HCT116 (cell line): ENCODE measurements at regions of chr18 and their contacts with region 1.

Region 1: DNA sequence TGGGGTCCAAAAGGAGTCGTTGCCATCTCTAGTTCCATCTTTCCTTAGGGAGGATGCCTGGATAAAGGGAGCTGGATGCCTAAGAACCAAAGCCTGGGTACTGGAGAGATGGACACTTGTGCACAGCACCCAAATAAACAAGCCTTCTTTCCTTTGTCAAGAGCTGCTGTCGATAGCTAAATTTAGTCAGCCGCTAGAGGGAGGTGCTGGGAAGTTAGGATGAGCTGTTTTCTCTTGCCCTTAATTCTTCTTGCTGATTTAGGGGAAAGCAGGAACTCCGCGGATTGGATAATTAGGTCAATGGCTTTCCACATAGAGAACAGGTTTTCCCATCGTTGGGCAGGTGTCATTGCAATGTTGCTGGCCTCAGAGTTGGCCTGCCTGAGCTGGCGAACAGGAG is 30.9 kb upstream of the SERPINB12 start:
- DNase-seq: peak; percentile 82
- ATAC-seq: peak; percentile 92
- H3K4me3 ChIP-seq: no peak overlapping the region
- H3K27ac ChIP-seq: no peak overlapping the region
- H3K4me1 ChIP-seq: no peaks in the 10 kb centered on the region
- H3K27me3 ChIP-seq: no peaks in the 10 kb centered on the region
- CTCF ChIP-seq: peak; percentile 55 to 85 (median 78); a peak in 5 of 6 replicates
- POLR2A ChIP-seq: no peak
- RAD21 ChIP-seq: peak; percentile 58

Region 2: GRCh38 chr18:63016270-63016669 is 495.0 kb before region 1 on chr18:
- CTCF ChIA-PET with region 1: interaction called, 12 read pairs
- POLR2A ChIA-PET with region 1: no interaction called
- RAD21 ChIA-PET with region 1: no interaction called
- intact Hi-C with region 1: loop called (anchors 5 kb)
- DNase-seq: peak; percentile 32
- ATAC-seq: peak; percentile 79
- H3K4me3 ChIP-seq: no peak overlapping the region
- H3K27ac ChIP-seq: no peak overlapping the region
- H3K4me1 ChIP-seq: no peaks in the 10 kb centered on the region
- H3K27me3 ChIP-seq: no peaks in the 10 kb centered on the region
- CTCF ChIP-seq: peak; percentile 73 to 87 (median 73)
- POLR2A ChIP-seq: no peak
- RAD21 ChIP-seq: peak; percentile 82

Region 3: DNA sequence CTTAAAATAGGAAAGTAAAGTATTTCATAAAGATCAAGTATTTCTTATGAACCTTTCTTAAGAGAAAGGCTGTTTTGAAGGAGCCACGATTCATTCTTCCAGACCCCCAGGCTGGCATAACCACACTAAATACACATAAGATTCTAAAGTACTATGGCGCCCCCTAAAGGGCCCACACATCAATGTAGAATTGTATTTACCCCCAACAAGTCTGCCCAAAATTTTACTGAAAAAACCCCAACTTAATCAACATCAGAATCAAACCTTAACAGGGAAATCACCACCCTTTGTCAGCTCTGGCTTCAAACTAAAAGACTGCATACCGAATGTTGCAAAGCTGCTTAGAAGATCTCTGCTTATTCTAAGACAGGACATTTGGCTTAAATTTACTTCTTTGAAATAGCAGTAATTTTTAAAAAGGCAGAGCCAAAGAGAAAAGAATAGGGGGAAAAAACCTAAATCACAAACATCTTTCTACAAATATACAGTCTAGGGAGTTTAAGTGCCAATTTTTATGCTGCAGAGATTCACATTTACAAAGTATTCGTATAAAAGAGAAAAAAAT is 171.3 kb before region 1 on chr18:
- CTCF ChIA-PET with region 1: no interaction called
- POLR2A ChIA-PET with region 1: no interaction called
- RAD21 ChIA-PET with region 1: no interaction called
- intact Hi-C with region 1: loop called (anchors 5 kb)
- DNase-seq: peak; percentile 10
- ATAC-seq: peak; percentile 57; the same call in 1 of the 2 replicates
- H3K4me3 ChIP-seq: no peak overlapping the region
- H3K27ac ChIP-seq: no peak overlapping the region
- H3K4me1 ChIP-seq: peaks cover 10 to 15% of the 10 kb centered on the region in 2 experiments
- H3K27me3 ChIP-seq: no peaks in the 10 kb centered on the region
- CTCF ChIP-seq: peak; percentile 29 to 78 (median 68); a peak in 5 of 6 replicates
- POLR2A ChIP-seq: no peak
- RAD21 ChIP-seq: peak; percentile 41; the same call in 1 of the 2 replicates

Region 4: GRCh38 chr18:63539904-63540510 is 28.7 kb after region 1 on chr18:
- CTCF ChIA-PET with region 1: no interaction called
- POLR2A ChIA-PET with region 1: no interaction called
- RAD21 ChIA-PET with region 1: no interaction called
- intact Hi-C with region 1: no loop called
- DNase-seq: no peak
- ATAC-seq: no peak
- H3K4me3 ChIP-seq: no peak overlapping the region
- H3K27ac ChIP-seq: no peak overlapping the region
- H3K4me1 ChIP-seq: no peaks in the 10 kb centered on the region
- H3K27me3 ChIP-seq: no peaks in the 10 kb centered on the region
- CTCF ChIP-seq: no peak
- POLR2A ChIP-seq: no peak
- RAD21 ChIP-seq: no peak

Region 5: GRCh38 chr18:63741769-63742168 is 230.5 kb after region 1 on chr18:
- CTCF ChIA-PET with region 1: interaction called, 82 read pairs
- POLR2A ChIA-PET with region 1: interaction called, 3 read pairs
- RAD21 ChIA-PET with region 1: interaction called, 5 to 6 read pairs
- intact Hi-C with region 1: no loop called
- DNase-seq: no peak
- ATAC-seq: no peak
- H3K4me3 ChIP-seq: no peak overlapping the region
- H3K27ac ChIP-seq: no peak overlapping the region
- H3K4me1 ChIP-seq: peaks cover 3 to 11% of the 10 kb centered on the region in 2 experiments; a peak in 3 of 4 replicates
- H3K27me3 ChIP-seq: no peaks in the 10 kb centered on the region
- CTCF ChIP-seq: peak; percentile 38 to 72 (median 51); a peak in 4 of 6 replicates
- POLR2A ChIP-seq: no peak
- RAD21 ChIP-seq: peak; percentile 78

Region 6: DNA sequence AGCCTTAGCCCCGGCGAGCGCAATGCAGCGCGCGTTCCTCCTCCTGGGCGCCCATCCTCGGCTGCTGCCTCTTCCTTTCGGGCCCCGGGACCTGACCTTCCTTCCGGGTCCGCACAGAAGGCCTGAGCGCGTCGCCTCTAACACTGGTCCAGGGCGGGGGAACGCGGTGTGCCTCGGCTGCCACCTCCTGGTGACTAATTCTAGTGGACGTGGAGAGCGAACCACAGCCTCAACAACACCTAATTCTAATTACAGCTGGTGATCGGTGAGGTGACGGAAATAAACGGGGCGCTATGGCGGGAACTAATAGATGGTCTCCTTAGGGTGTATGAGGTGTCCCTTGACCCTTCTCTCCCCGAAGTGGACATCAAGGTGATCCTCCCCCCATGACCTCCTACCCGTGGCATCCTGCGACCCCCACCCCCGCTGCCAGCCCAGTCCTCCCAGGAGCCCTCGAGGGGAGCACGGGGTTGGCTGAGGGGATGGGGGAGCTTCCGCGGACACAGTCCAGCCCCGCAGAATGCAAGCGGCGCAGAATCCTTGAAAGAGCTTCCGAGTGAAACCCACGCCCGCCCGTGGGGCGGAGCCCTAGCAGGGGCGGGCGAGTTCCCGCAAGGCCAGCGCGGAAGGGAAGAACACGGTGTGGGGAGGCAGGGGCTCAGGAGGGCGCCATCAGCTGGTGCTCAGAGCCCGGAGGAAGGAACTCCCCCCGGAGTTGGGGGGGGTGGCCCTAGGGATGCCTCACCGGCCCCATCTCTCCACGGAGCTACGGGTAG is 425.1 kb after region 1 on chr18:
- CTCF ChIA-PET with region 1: interaction called, 8 read pairs
- POLR2A ChIA-PET with region 1: no interaction called
- RAD21 ChIA-PET with region 1: no interaction called
- intact Hi-C with region 1: loop called (anchors 2 kb)
- DNase-seq: peak; percentile 64
- ATAC-seq: peak; percentile 100
- H3K4me3 ChIP-seq: peak overlapping the region; percentile 22 to 37
- H3K27ac ChIP-seq: no peak overlapping the region
- H3K4me1 ChIP-seq: peaks cover 0 to 10% of the 10 kb centered on the region in 2 experiments; a peak in 1 of 4 replicates
- H3K27me3 ChIP-seq: no peaks in the 10 kb centered on the region
- CTCF ChIP-seq: peak; percentile 63 to 78 (median 71); a peak in 5 of 6 replicates
- POLR2A ChIP-seq: no peak
- RAD21 ChIP-seq: peak; percentile 73